ENCODE measurements at regions of chr16 and their contacts with region 1.

Region 1: GRCh38 chr16:10918294-10919002 is 23.8 kb downstream of the DEXI start:
- DNase-seq: peak; percentile 80
- ATAC-seq: peak; percentile 78
- H3K4me3 Mint-ChIP-seq: peak overlapping the region; percentile 46
- H3K27ac Mint-ChIP-seq: peak overlapping the region; percentile 88
- H3K4me1 Mint-ChIP-seq: peaks cover 72% of the 10 kb centered on the region
- H3K27me3 Mint-ChIP-seq: no peaks in the 10 kb centered on the region
- CTCF ChIP-seq: no peak

Region 2: DNA sequence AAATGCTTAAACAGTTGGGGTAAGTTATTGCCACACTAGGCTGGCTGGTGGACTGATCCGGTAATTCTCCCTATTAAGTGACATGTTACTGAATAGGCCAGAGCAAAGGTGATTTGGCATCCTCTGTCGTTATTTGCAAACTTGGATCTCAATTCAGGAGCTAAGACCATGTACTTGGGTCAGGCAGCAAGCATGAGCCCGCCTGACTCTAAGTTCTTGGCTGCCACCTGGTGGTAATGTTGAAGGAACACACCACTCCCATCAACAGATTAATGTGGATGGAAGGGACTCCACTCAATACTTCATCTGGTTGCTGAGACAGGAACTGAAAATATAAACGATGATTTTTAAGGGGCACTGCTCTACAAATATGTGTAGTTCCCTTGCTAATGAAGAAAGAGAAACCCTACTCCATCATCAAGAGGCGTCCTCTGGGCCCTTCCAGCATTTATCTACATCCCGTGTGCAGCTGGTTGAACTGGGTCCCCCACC is 408.9 kb before region 1 on chr16:
- CTCF ChIA-PET with region 1: interaction called, 44 read pairs
- POLR2A ChIA-PET with region 1: interaction called, 7 read pairs
- intact Hi-C with region 1: loop called (anchors 1 kb)
- DNase-seq: no peak
- ATAC-seq: peak; percentile 96
- H3K4me3 Mint-ChIP-seq: no peak overlapping the region
- H3K27ac Mint-ChIP-seq: peak overlapping the region; percentile 19
- H3K4me1 Mint-ChIP-seq: peaks cover 17% of the 10 kb centered on the region
- H3K27me3 Mint-ChIP-seq: no peaks in the 10 kb centered on the region
- CTCF ChIP-seq: peak; percentile 58

Region 3: GRCh38 chr16:10668322-10669045 is 250.0 kb before region 1 on chr16:
- CTCF ChIA-PET with region 1: no interaction called
- POLR2A ChIA-PET with region 1: no interaction called
- intact Hi-C with region 1: loop called (anchors 1 kb)
- DNase-seq: no peak
- ATAC-seq: no peak
- H3K4me3 Mint-ChIP-seq: no peak overlapping the region
- H3K27ac Mint-ChIP-seq: no peak overlapping the region
- H3K4me1 Mint-ChIP-seq: no peaks in the 10 kb centered on the region
- H3K27me3 Mint-ChIP-seq: peaks cover 2% of the 10 kb centered on the region
- CTCF ChIP-seq: no peak

Region 4: GRCh38 chr16:10743610-10744393 is 174.6 kb before region 1 on chr16 and contains the start of gene NUBP1:
- CTCF ChIA-PET with region 1: interaction called, 18 read pairs
- POLR2A ChIA-PET with region 1: interaction called, 12 read pairs
- intact Hi-C with region 1: no loop called
- DNase-seq: peak; percentile 98
- ATAC-seq: peak; percentile 94
- H3K4me3 Mint-ChIP-seq: peak within 1 kb of the TSS; percentile 94
- H3K27ac Mint-ChIP-seq: peak within 1 kb of the TSS; percentile 99
- H3K4me1 Mint-ChIP-seq: peaks cover 69% of the 10 kb centered on the region
- H3K27me3 Mint-ChIP-seq: no peaks in the 10 kb centered on the region
- CTCF ChIP-seq: no peak
- total RNA-seq, gene NUBP1: 74.1 and 77.2 TPM in 2 replicates

Region 5: GRCh38 chr16:10765772-10766171 is 152.7 kb before region 1 on chr16:
- CTCF ChIA-PET with region 1: interaction called, 3 read pairs
- POLR2A ChIA-PET with region 1: no interaction called
- intact Hi-C with region 1: loop called (anchors 1 kb)
- DNase-seq: peak; percentile 57
- ATAC-seq: peak; percentile 97
- H3K4me3 Mint-ChIP-seq: peak overlapping the region; percentile 56
- H3K27ac Mint-ChIP-seq: peak overlapping the region; percentile 84
- H3K4me1 Mint-ChIP-seq: peaks cover 44% of the 10 kb centered on the region
- H3K27me3 Mint-ChIP-seq: no peaks in the 10 kb centered on the region
- CTCF ChIP-seq: no peak

Region 6: GRCh38 chr16:10883004-10883403 is 35.4 kb before region 1 on chr16:
- CTCF ChIA-PET with region 1: interaction called, 43 read pairs
- POLR2A ChIA-PET with region 1: interaction called, 234 read pairs
- intact Hi-C with region 1: no loop called
- DNase-seq: no peak
- ATAC-seq: no peak
- H3K4me3 Mint-ChIP-seq: peak overlapping the region; percentile 55
- H3K27ac Mint-ChIP-seq: peak overlapping the region; percentile 87
- H3K4me1 Mint-ChIP-seq: peaks cover 81% of the 10 kb centered on the region
- H3K27me3 Mint-ChIP-seq: no peaks in the 10 kb centered on the region
- CTCF ChIP-seq: no peak

Region 7: DNA sequence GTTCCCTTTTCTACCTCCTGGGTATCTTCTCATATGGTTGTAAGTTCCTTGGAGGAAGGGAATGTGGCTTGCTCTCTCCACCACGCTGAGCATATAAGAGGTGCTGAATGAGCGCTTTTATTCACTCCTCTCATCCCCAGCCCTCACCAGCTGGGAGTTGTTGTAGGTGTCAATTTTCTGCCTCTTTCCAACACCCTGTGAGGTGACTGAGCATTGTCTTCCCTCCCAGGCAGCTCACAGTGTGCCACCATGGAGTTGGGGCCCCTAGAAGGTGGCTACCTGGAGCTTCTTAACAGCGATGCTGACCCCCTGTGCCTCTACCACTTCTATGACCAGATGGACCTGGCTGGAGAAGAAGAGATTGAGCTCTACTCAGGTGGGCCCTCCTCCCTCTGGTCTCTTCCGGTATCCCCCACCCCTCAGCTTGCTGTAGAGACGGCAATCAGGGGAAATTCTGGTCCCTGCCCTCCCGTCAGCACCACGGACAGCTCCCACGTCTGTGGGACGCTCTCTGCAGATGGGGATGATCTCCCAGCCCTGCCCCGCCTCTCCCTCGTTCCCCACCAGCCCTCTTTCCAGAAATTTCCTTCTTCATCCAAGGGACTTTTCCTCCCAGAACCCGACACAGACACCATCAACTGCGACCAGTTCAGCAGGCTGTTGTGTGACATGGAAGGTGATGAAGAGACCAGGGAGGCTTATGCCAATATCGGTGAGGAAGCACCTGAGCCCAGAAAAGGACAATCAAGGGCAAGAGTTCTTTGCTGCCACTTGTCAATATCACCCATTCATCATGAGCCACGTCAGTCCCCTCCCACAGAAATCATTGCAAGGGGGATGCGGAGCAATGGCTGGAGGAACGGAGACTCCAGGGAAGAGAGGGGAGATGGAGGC is 23.1 kb before region 1 on chr16:
- CTCF ChIA-PET with region 1: interaction called, 12 read pairs
- POLR2A ChIA-PET with region 1: interaction called, 25 read pairs
- intact Hi-C with region 1: no loop called
- DNase-seq: peak; percentile 60
- ATAC-seq: no peak
- H3K4me3 Mint-ChIP-seq: peak overlapping the region; percentile 67
- H3K27ac Mint-ChIP-seq: peak overlapping the region; percentile 91
- H3K4me1 Mint-ChIP-seq: peaks cover 99% of the 10 kb centered on the region
- H3K27me3 Mint-ChIP-seq: no peaks in the 10 kb centered on the region
- CTCF ChIP-seq: no peak

Region 8: GRCh38 chr16:11328172-11329070 is 410.0 kb after region 1 on chr16:
- CTCF ChIA-PET with region 1: no interaction called
- POLR2A ChIA-PET with region 1: no interaction called
- intact Hi-C with region 1: no loop called
- DNase-seq: peak; percentile 66
- ATAC-seq: peak; percentile 65
- H3K4me3 Mint-ChIP-seq: peak overlapping the region; percentile 80
- H3K27ac Mint-ChIP-seq: peak overlapping the region; percentile 94
- H3K4me1 Mint-ChIP-seq: peaks cover 72% of the 10 kb centered on the region
- H3K27me3 Mint-ChIP-seq: no peaks in the 10 kb centered on the region
- CTCF ChIP-seq: no peak

Measured in activated B cell treated with CpG ODN at 0.5 μM for 24 hours (primary cell).